ENCODE measurements at regions of chr15 and their contacts with region 1.

Region 1: DNA sequence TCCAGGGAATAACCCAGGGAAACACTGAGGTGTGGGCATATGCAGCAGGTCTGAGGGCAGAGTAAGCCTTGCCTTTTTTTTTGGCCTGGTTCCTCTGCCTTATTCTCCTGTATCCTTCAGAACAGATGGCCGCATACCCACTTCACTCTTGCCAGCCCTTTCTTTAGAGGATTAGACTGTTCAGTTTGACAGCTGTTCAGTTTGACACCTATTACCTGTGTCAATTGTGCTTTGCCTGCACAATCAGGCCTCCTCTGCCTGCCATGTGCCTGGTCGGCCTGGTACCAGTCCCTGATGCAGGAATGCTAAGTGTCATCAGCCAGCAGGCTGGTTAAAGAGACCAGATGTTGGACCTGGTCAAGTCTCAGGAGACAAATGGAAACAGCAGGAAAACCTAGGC is 22.3 kb downstream of the TM6SF1 start:
- DNase-seq: no peak
- H3K4me3 ChIP-seq: no peak overlapping the region
- H3K27ac ChIP-seq: no peak overlapping the region
- H3K4me1 ChIP-seq: no peaks in the 10 kb centered on the region
- H3K27me3 ChIP-seq: no peaks in the 10 kb centered on the region
- CTCF ChIP-seq: no peak
- EP300 ChIP-seq: no peak
- POLR2A ChIP-seq: no peak
- RAD21 ChIP-seq: no peak

Region 2: GRCh38 chr15:83118968-83119367 is 10.8 kb before region 1 on chr15:
- CTCF ChIA-PET with region 1: interaction called, 3 read pairs
- POLR2A ChIA-PET with region 1: interaction called, 13 read pairs
- DNase-seq: no peak
- H3K4me3 ChIP-seq: no peak overlapping the region
- H3K27ac ChIP-seq: no peak overlapping the region
- H3K4me1 ChIP-seq: no peaks in the 10 kb centered on the region
- H3K27me3 ChIP-seq: no peaks in the 10 kb centered on the region; a peak in 1 of 7 replicates
- CTCF ChIP-seq: no peak
- EP300 ChIP-seq: no peak
- POLR2A ChIP-seq: no peak
- RAD21 ChIP-seq: no peak

Measured in H1 (cell line).